Transverse colon (tissue), 4 donors: ENCODE measurements at regions of chr6 and their contacts with region 1.

Region 1: DNA sequence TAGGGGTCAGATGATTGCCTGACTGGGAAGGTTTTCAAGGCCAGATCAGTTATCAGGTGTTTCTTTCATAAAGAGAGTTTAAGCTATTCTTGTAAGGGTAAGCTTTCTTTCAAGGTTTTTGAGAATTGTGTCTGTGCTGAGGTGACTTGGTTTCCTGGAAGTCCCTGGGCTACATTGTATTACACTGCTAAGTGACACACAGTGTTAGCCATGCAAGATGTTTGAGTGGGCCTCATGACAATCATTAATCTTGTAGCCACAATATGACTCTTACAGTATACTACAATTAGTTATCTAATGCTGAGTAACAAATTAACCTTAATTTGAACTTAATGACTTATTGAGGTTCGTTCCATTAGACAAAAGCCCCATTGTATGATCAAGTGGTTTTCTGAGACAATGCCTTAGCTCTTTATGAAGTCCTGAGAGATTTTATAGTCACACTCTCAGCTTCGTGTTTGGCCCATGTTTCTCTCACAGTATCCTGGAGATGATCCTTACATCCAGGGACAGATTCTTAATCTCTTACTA is 186.7 kb downstream of the RPS12 start:
- DNase-seq: no peak
- H3K4me3 ChIP-seq: no peak overlapping the region
- H3K27ac ChIP-seq: no peak overlapping the region
- H3K4me1 ChIP-seq: no peaks in the 10 kb centered on the region
- H3K27me3 ChIP-seq: no peaks in the 10 kb centered on the region
- CTCF ChIP-seq: no peak
- EP300 ChIP-seq: no peak
- POLR2A ChIP-seq: no peak

Region 2: DNA sequence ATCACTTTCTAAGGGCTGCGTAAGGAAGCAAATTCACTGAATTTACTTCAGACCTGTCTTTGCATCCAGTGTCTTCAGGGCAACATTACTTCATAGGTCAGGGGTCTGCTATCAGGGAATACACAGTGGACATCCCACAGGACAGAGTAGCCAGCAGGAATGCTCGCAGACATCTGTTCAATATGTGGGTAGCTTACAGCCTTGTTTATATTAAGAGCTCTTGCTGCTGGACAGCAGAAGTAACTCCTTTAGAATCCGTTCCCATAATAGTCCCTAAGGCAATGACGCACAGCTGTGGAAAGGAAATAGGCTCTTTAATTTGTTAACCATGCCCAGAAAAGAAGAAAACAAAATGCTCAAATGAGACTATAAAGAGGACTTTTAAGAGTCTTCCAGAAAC is 798.5 kb before region 1 on chr6:
- in situ Hi-C with region 1: no loop called
- intact Hi-C with region 1: no loop called
- DNase-seq: no peak
- H3K4me3 ChIP-seq: no peak overlapping the region
- H3K27ac ChIP-seq: peak overlapping the region; percentile 30 to 54 (median 46)
- H3K4me1 ChIP-seq: peaks cover 0 to 5% (median 0%) of the 10 kb centered on the region in 4 donors
- H3K27me3 ChIP-seq: no peaks in the 10 kb centered on the region
- CTCF ChIP-seq: no peak
- EP300 ChIP-seq: no peak
- POLR2A ChIP-seq: no peak

Region 3: DNA sequence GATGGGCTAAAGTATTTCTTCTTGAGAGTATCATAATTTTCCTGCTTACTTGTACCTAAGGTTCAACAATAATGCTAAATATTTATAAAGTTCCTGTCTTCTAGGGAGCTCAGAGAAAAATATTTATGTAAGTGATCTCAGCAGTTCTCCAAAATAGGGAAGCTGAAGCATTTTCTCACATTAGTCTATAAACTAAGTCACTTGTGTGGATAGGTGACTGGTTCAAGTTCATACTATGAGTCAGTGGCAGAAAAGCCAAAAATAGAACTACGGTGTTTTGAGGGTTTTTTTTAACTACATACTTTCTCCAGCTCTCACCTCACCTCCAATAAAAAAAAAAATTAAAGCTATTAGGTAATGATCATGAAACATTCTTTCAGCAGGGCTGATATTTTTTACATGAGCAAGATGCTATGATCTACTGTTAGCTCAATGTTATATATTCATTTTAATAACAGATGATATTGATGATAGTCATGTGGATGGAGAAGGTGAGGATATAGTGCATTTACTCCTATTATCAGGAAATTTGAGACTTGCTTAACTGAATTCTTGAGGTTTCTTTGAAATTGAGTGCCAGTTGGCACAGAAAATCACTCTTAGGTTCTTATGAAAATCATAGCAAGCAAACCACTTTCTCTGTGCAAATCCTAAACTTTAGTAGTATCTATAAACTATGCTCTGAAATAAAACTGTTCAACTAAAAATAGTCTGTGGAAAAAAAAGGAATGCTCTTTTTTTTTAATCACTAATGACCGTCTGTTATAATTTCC is 595.8 kb before region 1 on chr6:
- in situ Hi-C with region 1: no loop called
- intact Hi-C with region 1: loop called (anchors 5 kb)
- DNase-seq: no peak
- H3K4me3 ChIP-seq: no peak overlapping the region
- H3K27ac ChIP-seq: no peak overlapping the region
- H3K4me1 ChIP-seq: peaks cover 0 to 21% (median 7%) of the 10 kb centered on the region in 4 donors
- H3K27me3 ChIP-seq: peaks cover 41% of the 10 kb centered on the region
- CTCF ChIP-seq: no peak
- EP300 ChIP-seq: no peak
- POLR2A ChIP-seq: no peak

Region 4: GRCh38 chr6:132763269-132763668 is 237.8 kb before region 1 on chr6:
- in situ Hi-C with region 1: no loop called
- intact Hi-C with region 1: no loop called
- DNase-seq: peak; percentile 29
- H3K4me3 ChIP-seq: peak overlapping the region in 1 of 4 donors; percentile 18
- H3K27ac ChIP-seq: peak overlapping the region in 1 of 4 donors; percentile 21
- H3K4me1 ChIP-seq: no peaks in the 10 kb centered on the region
- H3K27me3 ChIP-seq: no peaks in the 10 kb centered on the region
- CTCF ChIP-seq: no peak
- EP300 ChIP-seq: no peak
- POLR2A ChIP-seq: no peak

Region 5: GRCh38 chr6:133184798-133185372 is 183.8 kb after region 1 on chr6:
- in situ Hi-C with region 1: no loop called
- intact Hi-C with region 1: no loop called
- DNase-seq: no peak
- H3K4me3 ChIP-seq: no peak overlapping the region
- H3K27ac ChIP-seq: no peak overlapping the region
- H3K4me1 ChIP-seq: no peaks in the 10 kb centered on the region
- H3K27me3 ChIP-seq: no peaks in the 10 kb centered on the region
- CTCF ChIP-seq: peak in 4 of 5 experiments; percentile 16 to 49 (median 30)
- EP300 ChIP-seq: no peak
- POLR2A ChIP-seq: no peak